Prostate gland (tissue), 2 donors: ENCODE measurements at regions of chr7 and their contacts with region 1.

Region 1: GRCh38 chr7:22559829-22560489 is 60.0 kb upstream of the STEAP1B start:
- DNase-seq: peak; percentile 64
- H3K4me3 ChIP-seq: no peak overlapping the region
- H3K27ac ChIP-seq: no peak overlapping the region
- H3K4me1 ChIP-seq: no peaks in the 10 kb centered on the region
- H3K27me3 ChIP-seq: no peaks in the 10 kb centered on the region
- CTCF ChIP-seq: peak; percentile 66 to 87 (median 86)
- POLR2A ChIP-seq: no peak

Region 2: GRCh38 chr7:21767300-21767900 is 792.6 kb before region 1 on chr7:
- intact Hi-C with region 1: no loop called
- DNase-seq: peak; percentile 56
- H3K4me3 ChIP-seq: no peak overlapping the region
- H3K27ac ChIP-seq: no peak overlapping the region
- H3K4me1 ChIP-seq: no peaks in the 10 kb centered on the region
- H3K27me3 ChIP-seq: no peaks in the 10 kb centered on the region
- CTCF ChIP-seq: peak in 3 of 4 experiments; percentile 32 to 81 (median 68)
- POLR2A ChIP-seq: no peak

Region 3: GRCh38 chr7:22402250-22402649 is 157.7 kb before region 1 on chr7:
- intact Hi-C with region 1: no loop called
- DNase-seq: no peak
- H3K4me3 ChIP-seq: no peak overlapping the region
- H3K27ac ChIP-seq: no peak overlapping the region
- H3K4me1 ChIP-seq: no peaks in the 10 kb centered on the region
- H3K27me3 ChIP-seq: no peaks in the 10 kb centered on the region
- CTCF ChIP-seq: no peak
- POLR2A ChIP-seq: no peak

Region 4: DNA sequence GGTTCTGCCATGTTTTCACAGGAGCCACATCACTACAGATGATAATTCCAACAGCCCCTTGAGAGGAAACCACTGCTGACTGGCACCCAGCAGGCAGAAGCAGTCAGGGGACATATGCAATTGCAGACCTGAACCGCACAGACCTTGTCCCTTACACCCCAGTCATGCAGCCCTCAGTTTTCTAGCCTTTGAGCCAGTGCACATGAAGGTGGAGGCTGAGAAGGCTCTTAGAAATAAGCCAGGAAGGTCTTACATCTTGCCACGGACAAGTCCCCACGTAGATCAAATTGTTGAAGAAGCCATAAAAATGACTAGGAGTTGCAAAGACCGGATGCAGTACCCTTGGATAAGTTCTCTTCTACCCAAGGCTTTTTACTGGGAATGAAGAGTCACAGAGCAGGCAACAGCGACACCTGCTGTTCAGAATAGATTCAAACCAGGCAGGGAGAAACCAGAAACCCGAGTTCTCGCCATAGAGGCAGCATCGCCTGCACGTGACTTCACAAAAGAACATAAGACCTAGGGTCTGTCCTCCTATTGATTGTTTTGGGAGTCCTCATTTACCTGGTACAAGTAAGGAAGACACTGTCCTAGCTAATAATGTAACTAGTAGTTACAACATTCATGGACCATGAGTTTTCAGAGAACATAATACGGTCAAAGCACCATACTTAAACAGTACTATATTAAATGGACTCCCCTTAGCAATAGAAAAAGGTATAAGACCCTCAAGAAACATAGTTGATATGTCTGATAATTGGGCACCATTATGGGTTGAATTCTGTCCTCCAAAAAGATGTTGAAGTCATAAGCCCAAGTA is 71.1 kb before region 1 on chr7:
- intact Hi-C with region 1: no loop called
- DNase-seq: peak; percentile 71
- H3K4me3 ChIP-seq: no peak overlapping the region
- H3K27ac ChIP-seq: no peak overlapping the region
- H3K4me1 ChIP-seq: no peaks in the 10 kb centered on the region
- H3K27me3 ChIP-seq: no peaks in the 10 kb centered on the region
- CTCF ChIP-seq: peak; percentile 70 to 94 (median 88)
- POLR2A ChIP-seq: no peak

Region 5: DNA sequence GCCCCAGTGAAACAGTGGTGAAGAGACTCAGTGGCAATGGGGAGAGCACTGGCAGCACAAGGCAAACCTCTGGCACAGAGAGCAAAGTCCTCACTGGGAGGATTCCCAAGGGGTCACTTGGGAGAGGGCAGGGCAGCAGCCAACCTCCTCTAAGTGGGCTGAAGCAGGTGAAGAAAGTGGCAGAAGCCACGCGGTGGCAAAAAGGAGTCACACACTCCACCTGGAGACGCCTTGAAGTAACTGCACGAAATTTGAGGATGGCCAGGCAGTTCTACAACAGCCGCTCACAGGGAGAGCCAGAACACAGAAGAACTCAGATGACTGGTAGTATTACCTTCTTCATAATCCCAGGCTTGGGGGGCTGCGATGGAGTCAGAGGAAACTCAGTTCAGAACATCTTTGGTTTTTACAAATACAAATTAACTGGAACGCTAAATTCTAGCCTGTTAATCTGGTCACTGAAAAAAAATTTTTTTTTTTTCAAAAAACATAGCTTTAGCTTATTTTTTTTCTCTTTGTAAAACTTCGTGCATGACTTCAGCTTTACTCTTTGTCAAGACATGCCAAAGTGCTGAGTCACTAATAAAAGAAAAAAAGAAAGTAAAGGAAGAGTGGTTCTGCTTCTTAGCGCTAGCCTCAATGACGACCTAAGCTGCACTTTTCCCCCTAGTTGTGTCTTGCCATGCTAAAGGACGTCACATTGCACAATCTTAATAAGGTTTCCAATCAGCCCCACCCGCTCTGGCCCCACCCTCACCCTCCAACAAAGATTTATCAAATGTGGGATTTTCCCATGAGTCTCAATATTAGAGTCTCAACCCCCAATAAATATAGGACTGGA is 166.6 kb after region 1 on chr7:
- intact Hi-C with region 1: loop called (anchors 2 kb)
- DNase-seq: peak; percentile 20
- H3K4me3 ChIP-seq: no peak overlapping the region
- H3K27ac ChIP-seq: no peak overlapping the region
- H3K4me1 ChIP-seq: no peaks in the 10 kb centered on the region
- H3K27me3 ChIP-seq: no peaks in the 10 kb centered on the region
- CTCF ChIP-seq: peak in 3 of 4 experiments; percentile 28 to 50 (median 46)
- POLR2A ChIP-seq: no peak

Region 6: DNA sequence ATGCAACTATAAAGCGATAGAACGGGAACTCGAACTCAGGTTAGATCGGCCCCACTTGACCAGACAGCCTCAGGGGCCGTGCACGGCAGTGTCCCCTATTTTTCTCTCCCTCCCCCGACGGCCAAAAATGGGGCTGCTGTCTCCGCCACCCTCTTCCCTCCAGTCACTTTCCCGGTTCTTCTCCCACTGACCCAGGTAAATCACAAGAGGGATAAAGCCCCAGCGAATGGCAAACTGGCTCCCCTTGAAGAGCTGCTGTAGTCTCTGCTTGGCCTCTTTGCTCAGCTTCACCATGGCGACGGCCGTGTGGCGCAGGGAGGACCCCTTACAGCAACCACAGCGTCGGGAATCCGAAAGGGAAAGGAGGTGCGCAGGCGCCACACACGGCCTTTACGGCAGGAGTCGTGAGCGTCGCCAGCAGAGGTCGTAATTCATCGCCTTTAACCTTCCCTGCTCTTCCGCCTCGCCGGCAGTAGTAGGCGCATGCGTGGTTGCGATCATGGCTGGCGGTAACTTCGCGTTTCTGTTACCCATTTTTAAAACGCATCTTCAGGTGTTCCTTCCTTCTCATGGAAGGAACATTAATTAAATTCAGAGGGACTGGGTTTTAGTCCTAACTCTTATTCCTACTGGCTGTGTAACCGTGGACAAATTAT is 262.7 kb after region 1 on chr7 and contains the start of gene TOMM7:
- intact Hi-C with region 1: loop called (anchors 5 kb)
- DNase-seq: peak; percentile 81
- H3K4me3 ChIP-seq: peak within 1 kb of the TSS; percentile 63 to 72
- H3K27ac ChIP-seq: peak within 1 kb of the TSS; percentile 62
- H3K4me1 ChIP-seq: no peaks in the 10 kb centered on the region
- H3K27me3 ChIP-seq: no peaks in the 10 kb centered on the region
- CTCF ChIP-seq: peak; percentile 29 to 74 (median 66)
- POLR2A ChIP-seq: peak; percentile 26
- total RNA-seq, gene TOMM7: 124 to 190 TPM

Region 7: GRCh38 chr7:22934473-22935065 is 374.6 kb after region 1 on chr7:
- intact Hi-C with region 1: loop called (anchors 10 kb)
- DNase-seq: no peak
- H3K4me3 ChIP-seq: no peak overlapping the region
- H3K27ac ChIP-seq: no peak overlapping the region
- H3K4me1 ChIP-seq: no peaks in the 10 kb centered on the region
- H3K27me3 ChIP-seq: no peaks in the 10 kb centered on the region
- CTCF ChIP-seq: no peak
- POLR2A ChIP-seq: no peak

Region 8: GRCh38 chr7:23055582-23056178 is 495.7 kb after region 1 on chr7:
- intact Hi-C with region 1: loop called (anchors 2 kb)
- DNase-seq: peak; percentile 39
- H3K4me3 ChIP-seq: no peak overlapping the region
- H3K27ac ChIP-seq: no peak overlapping the region
- H3K4me1 ChIP-seq: no peaks in the 10 kb centered on the region
- H3K27me3 ChIP-seq: no peaks in the 10 kb centered on the region
- CTCF ChIP-seq: peak; percentile 14 to 81 (median 64)
- POLR2A ChIP-seq: no peak